OCI-LY7 (cell line): ENCODE measurements at regions of chr12 and their contacts with region 1.

Region 1: GRCh38 chr12:48671231-48671856 is 10.7 kb downstream of the KANSL2 start:
- DNase-seq: no peak
- H3K4me3 ChIP-seq: no peak overlapping the region
- H3K27ac ChIP-seq: no peak overlapping the region
- H3K4me1 ChIP-seq: no peaks in the 10 kb centered on the region
- CTCF ChIP-seq: no peak

Region 2: DNA sequence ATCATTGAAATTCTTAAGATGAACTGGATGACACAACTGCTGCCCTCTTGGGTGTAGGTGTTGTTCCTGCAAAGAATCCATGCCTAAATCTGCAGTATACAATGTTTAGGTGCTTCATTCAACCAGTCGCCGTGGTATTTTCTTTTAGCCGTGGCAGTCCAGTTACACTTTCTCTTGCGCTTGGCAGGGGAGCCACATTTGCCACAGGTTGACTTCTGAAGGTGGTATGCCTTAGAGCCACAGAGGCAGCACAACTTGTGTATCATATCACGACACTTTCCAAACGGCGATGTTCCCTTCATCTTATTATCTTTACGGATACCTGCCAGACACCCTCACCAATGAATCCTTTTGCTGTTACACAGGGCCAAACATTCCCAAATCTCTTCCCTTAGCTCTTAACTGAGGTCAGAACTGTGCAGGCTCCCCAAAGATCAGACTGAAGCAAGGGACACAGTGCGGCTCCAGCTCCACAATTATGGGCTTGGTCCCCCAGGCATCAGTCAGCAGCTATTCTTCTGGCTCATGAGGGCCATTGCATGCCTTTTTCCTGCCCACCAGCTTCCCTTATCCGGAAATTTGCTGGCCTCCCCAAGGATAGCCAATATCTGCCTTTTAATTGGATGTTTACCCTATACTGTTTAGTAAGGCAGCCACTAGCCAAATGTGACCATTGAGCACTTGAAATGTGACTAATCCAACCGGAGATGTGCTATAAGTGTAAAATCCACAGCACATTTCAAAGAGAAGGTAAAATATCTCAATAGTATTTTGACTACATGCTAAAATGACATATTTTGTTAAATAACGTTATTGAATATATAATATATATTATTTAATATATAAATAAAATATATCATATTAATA is 616.2 kb before region 1 on chr12:
- CTCF ChIA-PET with region 1: no interaction called
- POLR2A ChIA-PET with region 1: no interaction called
- intact Hi-C with region 1: loop called (anchors 10 kb)
- DNase-seq: no peak
- H3K4me3 ChIP-seq: no peak overlapping the region
- H3K27ac ChIP-seq: no peak overlapping the region
- H3K4me1 ChIP-seq: no peaks in the 10 kb centered on the region
- CTCF ChIP-seq: no peak

Region 3: DNA sequence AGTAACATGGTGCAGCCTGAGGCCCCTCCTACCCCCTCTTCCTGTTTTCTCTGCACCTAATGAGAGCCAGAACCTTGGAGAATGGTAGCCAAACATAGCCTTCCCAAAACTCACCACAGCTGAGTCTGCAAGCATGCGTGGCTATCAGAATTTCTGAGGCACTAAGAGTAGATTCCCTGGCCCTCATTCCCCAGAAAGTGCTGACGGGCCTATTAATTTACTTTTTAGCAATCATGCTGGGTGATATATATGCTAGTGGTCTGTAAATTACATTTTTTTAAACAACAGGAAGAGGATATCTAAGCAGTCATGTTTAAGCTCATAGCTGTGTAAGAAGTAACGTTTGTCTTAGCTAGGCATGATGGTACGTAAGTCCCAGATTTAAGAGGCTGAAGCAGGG is 19.7 kb before region 1 on chr12:
- CTCF ChIA-PET with region 1: no interaction called
- POLR2A ChIA-PET with region 1: interaction called, 11 read pairs
- intact Hi-C with region 1: no loop called
- DNase-seq: no peak
- H3K4me3 ChIP-seq: no peak overlapping the region
- H3K27ac ChIP-seq: no peak overlapping the region
- H3K4me1 ChIP-seq: no peaks in the 10 kb centered on the region
- CTCF ChIP-seq: no peak